SK-N-SH (cell line): ENCODE measurements at regions of chr1 and their contacts with region 1.

Region 1: GRCh38 chr1:44835738-44836675 is 7.0 kb downstream of the PTCH2 start:
- DNase-seq: peak; percentile 83
- H3K4me3 ChIP-seq: no peak overlapping the region
- H3K27ac ChIP-seq: no peak overlapping the region
- H3K4me1 ChIP-seq: peaks cover 0 to 2% of the 10 kb centered on the region in 2 experiments; a peak in 1 of 4 replicates
- H3K27me3 ChIP-seq: no peaks in the 10 kb centered on the region
- CTCF ChIP-seq: peak; percentile 87
- EP300 ChIP-seq: no peak
- RAD21 ChIP-seq: peak; percentile 90

Region 2: DNA sequence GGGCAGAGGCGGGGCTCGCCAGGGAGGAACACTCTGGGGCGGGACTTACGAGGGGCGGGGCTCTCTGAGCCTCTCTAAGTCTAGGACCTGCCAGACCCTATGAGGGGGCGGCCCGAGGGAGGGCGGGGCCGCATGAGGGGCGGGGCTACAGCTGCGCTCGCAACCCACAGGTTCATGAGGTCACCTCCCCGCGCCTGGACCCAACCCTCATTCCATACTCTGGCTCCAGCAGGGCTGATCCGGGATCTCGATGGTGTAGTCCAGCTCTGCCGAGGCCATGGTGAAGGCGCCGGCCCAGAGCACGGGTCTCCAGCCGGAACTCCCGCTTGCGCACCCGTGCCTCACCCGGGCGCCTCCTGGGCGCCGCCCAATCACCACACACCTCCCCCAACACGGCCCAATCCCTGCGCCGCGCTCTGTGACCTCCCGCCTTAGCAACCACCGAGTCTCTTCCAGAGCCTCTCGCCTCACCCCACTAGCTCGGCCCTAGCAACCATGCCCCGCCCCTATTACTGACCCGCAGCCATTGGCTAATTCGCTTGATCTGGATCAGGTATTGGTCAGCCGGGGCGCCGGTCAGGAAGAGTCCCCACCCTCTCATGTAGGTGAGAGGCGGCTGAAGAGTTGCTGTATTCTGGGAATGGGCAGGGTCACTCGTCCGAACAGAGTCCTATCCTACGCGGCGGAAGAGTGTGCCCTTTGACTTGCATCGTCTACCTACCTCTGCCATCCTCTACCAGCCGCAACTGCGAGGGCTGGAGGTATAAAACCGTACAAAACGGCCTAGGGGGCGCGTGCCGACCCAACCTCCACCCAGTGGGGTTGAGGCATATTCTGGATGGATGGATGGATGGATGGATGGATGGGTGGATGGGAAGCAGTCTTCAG is 161.7 kb before region 1 on chr1 and contains the starts of genes ARMH1 and TMEM53:
- CTCF ChIA-PET with region 1: no interaction called
- POLR2A ChIA-PET with region 1: no interaction called
- DNase-seq: peak; percentile 94
- H3K4me3 ChIP-seq: peak within 1 kb of the TSS; percentile 68 to 77
- H3K27ac ChIP-seq: peak within 1 kb of the TSS; percentile 76 to 94
- H3K4me1 ChIP-seq: peaks cover 7 to 24% of the 10 kb centered on the region in 2 experiments; a peak in 1 of 4 replicates
- H3K27me3 ChIP-seq: no peaks in the 10 kb centered on the region
- CTCF ChIP-seq: 0 out of 2 replicates have a peak, but pooled peaks have one; percentile 19
- EP300 ChIP-seq: no peak
- RAD21 ChIP-seq: no peak
- polyA plus RNA-seq, gene ARMH1: 6.6 and 10.5 TPM in 2 replicates
- polyA plus RNA-seq, gene TMEM53: 14.9 and 16.9 TPM in 2 replicates

Region 3: DNA sequence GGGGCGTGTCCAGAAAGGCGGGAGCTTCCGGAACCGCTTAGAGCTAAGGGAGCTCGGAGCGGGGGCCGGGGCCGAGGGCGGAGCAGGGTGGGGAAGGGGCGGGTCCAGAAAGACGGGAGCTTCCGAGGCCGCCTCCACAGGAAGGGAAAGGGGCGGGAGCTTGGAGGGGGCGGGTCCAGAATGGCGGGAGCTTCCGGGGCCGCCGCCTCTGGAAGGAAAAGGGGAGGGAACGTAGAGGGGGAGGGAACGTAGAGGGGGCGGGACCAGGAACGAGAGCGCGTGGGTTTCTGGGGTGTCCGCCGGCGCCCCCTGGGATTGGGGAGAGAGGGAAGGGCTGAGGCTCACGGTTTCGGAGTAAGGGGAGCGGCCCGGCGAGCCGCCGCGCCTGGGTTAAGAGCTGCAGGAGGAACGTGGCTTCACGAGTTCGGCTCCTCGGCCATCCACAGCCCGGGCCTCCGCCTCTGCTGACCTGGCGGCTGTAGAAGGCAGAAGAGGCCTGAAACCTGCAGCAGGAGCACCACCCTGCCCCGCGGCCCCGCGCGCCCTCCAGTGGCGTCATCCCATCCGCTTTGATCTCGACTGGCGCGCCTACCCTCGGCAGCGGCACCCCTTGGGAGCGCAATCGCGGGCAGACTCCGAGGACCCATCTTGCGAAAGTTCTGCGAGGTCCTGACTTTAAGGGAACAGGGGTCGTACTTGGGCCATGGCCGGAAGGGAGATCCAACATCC is 467.7 kb after region 1 on chr1:
- CTCF ChIA-PET with region 1: interaction called, 10 read pairs
- POLR2A ChIA-PET with region 1: no interaction called
- DNase-seq: peak; percentile 97
- H3K4me3 ChIP-seq: peak overlapping the region; percentile 68 to 78
- H3K27ac ChIP-seq: peak overlapping the region; percentile 77 to 87
- H3K4me1 ChIP-seq: peaks cover 0 to 13% of the 10 kb centered on the region in 2 experiments; a peak in 1 of 4 replicates
- H3K27me3 ChIP-seq: no peaks in the 10 kb centered on the region
- CTCF ChIP-seq: peak; percentile 74
- EP300 ChIP-seq: no peak
- RAD21 ChIP-seq: peak; percentile 60